ENCODE measurements at regions of chr6 and their contacts with region 1.

Region 1: GRCh38 chr6:31739639-31740396 is at the start of gene MSH5:
- DNase-seq: peak; percentile 99
- H3K4me3 ChIP-seq: peak within 1 kb of the TSS; percentile 67 to 76 (median 74)
- H3K27ac ChIP-seq: peak within 1 kb of the TSS; percentile 83
- H3K4me1 ChIP-seq: peaks cover 34% of the 10 kb centered on the region
- H3K27me3 ChIP-seq: no peaks in the 10 kb centered on the region
- CTCF ChIP-seq: no peak
- total RNA-seq, gene MSH5: 9.3 to 28.3 TPM

Region 2: GRCh38 chr6:31128093-31128676 is 611.6 kb before region 1 on chr6:
- CTCF ChIA-PET with region 1: no interaction called
- dilution Hi-C with region 1: no loop called
- in situ Hi-C with region 1: no loop called
- intact Hi-C with region 1: no loop called
- DNase-seq: peak; percentile 46
- H3K4me3 ChIP-seq: no peak overlapping the region
- H3K27ac ChIP-seq: no peak overlapping the region
- H3K4me1 ChIP-seq: peaks cover 38% of the 10 kb centered on the region
- H3K27me3 ChIP-seq: no peaks in the 10 kb centered on the region
- CTCF ChIP-seq: peak; percentile 82 to 90

Region 3: GRCh38 chr6:31619805-31620585 is 119.8 kb before region 1 on chr6:
- CTCF ChIA-PET with region 1: no interaction called
- dilution Hi-C with region 1: no loop called
- in situ Hi-C with region 1: no loop called
- intact Hi-C with region 1: loop called (anchors 5 kb)
- DNase-seq: peak; percentile 99
- H3K4me3 ChIP-seq: peak overlapping the region; percentile 55 to 88 (median 77)
- H3K27ac ChIP-seq: peak overlapping the region; percentile 96
- H3K4me1 ChIP-seq: peaks cover 16% of the 10 kb centered on the region
- H3K27me3 ChIP-seq: no peaks in the 10 kb centered on the region
- CTCF ChIP-seq: no peak

Region 4: DNA sequence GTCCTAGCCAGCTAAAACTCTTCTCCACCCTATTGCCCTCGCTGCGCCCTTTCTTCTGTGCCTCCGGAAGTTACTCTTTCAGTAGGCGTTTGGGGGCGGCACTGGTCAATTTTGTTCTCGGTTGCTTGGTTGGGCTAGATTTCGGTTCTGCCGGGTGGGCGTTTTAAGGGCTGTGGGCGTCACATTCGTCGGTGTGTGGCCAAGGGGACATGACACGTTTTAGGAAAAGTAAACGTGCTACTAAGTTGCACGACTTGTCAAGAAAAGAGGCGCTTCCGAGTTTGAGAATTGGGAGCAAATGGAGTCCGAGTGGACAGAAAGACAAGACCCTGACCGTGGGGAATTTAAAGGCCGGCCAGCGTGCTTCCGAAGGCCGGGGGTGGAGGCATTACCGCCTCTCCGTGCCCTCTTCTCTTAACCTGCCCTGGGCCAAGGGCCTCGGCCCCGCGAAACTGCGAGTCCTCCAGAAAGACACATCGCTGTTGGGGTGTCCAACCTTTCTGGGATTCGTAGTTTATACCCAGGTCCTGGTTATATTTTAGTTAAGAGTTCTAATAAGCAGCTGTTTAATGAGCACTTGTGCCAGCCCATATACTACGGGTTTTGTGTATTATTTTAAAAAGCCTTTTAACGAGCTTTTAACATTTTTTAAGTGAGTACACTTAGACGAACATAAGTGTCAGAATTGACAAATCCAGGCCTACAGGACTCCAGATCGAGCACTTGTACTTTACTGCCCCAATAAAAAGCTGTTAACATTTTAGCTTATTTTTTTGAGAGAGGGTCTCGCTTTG is 86.7 kb before region 1 on chr6:
- CTCF ChIA-PET with region 1: no interaction called
- dilution Hi-C with region 1: no loop called
- in situ Hi-C with region 1: no loop called
- intact Hi-C with region 1: loop called (anchors 1 kb)
- DNase-seq: no peak
- H3K4me3 ChIP-seq: peak overlapping the region; percentile 62 to 95 (median 83)
- H3K27ac ChIP-seq: peak overlapping the region; percentile 75
- H3K4me1 ChIP-seq: peaks cover 15% of the 10 kb centered on the region
- H3K27me3 ChIP-seq: no peaks in the 10 kb centered on the region
- CTCF ChIP-seq: peak in 1 of 2 donors; percentile 1

Region 5: GRCh38 chr6:31702819-31703522 is 36.8 kb before region 1 on chr6 and contains the start of gene ABHD16A:
- CTCF ChIA-PET with region 1: no interaction called
- dilution Hi-C with region 1: no loop called
- in situ Hi-C with region 1: no loop called
- intact Hi-C with region 1: loop called (anchors 1 kb)
- DNase-seq: peak; percentile 97
- H3K4me3 ChIP-seq: peak within 1 kb of the TSS; percentile 70 to 91 (median 80)
- H3K27ac ChIP-seq: peak within 1 kb of the TSS; percentile 75
- H3K4me1 ChIP-seq: peaks cover 12% of the 10 kb centered on the region
- H3K27me3 ChIP-seq: no peaks in the 10 kb centered on the region
- CTCF ChIP-seq: no peak
- total RNA-seq, gene ABHD16A: 24.2 to 24.8 TPM

Region 6: DNA sequence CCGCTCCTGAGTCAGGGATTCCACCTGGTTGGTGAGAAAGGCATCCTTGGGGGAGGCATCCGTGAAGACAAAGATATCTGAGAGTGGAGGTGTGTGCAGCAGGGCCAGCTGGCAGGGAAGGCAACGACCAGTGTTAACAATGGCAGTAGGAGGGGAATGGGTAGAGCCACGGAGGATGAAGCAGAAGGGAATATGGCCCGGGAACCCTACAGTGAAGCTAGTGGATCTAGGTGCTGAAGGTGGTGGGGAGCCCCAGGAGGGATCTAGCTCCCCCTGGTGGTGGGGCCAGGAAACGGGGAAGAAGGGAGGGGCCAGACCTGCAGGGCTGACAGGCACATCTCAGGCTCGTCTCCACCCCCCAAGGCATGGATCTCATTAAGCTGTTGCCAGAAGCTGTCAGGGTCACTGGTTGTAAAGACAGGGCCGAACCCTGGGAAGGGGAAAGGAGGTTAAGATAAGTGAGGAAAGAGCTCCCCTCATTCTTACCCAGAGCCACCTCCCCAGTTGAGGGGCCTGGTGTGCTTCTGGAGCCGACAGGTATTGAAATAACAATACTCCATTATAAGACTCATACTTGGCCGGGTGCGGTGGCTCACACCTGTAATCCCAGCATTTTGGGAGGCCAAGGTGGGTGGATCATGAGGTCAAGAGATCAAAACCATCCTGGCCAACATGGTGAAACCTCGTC is 30.0 kb after region 1 on chr6:
- CTCF ChIA-PET with region 1: interaction called, 4 read pairs
- dilution Hi-C with region 1: no loop called
- in situ Hi-C with region 1: no loop called
- intact Hi-C with region 1: loop called (anchors 2 kb)
- DNase-seq: peak; percentile 70
- H3K4me3 ChIP-seq: no peak overlapping the region
- H3K27ac ChIP-seq: no peak overlapping the region
- H3K4me1 ChIP-seq: peaks cover 7% of the 10 kb centered on the region
- H3K27me3 ChIP-seq: no peaks in the 10 kb centered on the region
- CTCF ChIP-seq: peak; percentile 88 to 95

Region 7: GRCh38 chr6:31795616-31796298 is 55.9 kb after region 1 on chr6 and contains the start of gene VARS1:
- CTCF ChIA-PET with region 1: no interaction called
- dilution Hi-C with region 1: no loop called
- in situ Hi-C with region 1: no loop called
- intact Hi-C with region 1: loop called (anchors 2 kb)
- DNase-seq: peak; percentile 84
- H3K4me3 ChIP-seq: peak within 1 kb of the TSS; percentile 54 to 88 (median 82)
- H3K27ac ChIP-seq: peak within 1 kb of the TSS; percentile 87
- H3K4me1 ChIP-seq: peaks cover 33% of the 10 kb centered on the region
- H3K27me3 ChIP-seq: no peaks in the 10 kb centered on the region
- CTCF ChIP-seq: peak; percentile 47 to 87
- total RNA-seq, gene VARS1: 71.8 to 131 TPM

Region 8: GRCh38 chr6:31834434-31835198 is 94.8 kb after region 1 on chr6:
- CTCF ChIA-PET with region 1: no interaction called
- dilution Hi-C with region 1: no loop called
- in situ Hi-C with region 1: no loop called
- intact Hi-C with region 1: loop called (anchors 2 kb)
- DNase-seq: peak; percentile 86
- H3K4me3 ChIP-seq: peak overlapping the region; percentile 73 to 96 (median 82)
- H3K27ac ChIP-seq: peak overlapping the region; percentile 95
- H3K4me1 ChIP-seq: peaks cover 27% of the 10 kb centered on the region
- H3K27me3 ChIP-seq: no peaks in the 10 kb centered on the region
- CTCF ChIP-seq: no peak

Measured in mammary epithelial cell (primary cell).